IMR-90 (cell line): ENCODE measurements at regions of chr12 and their contacts with region 1.

Region 1: DNA sequence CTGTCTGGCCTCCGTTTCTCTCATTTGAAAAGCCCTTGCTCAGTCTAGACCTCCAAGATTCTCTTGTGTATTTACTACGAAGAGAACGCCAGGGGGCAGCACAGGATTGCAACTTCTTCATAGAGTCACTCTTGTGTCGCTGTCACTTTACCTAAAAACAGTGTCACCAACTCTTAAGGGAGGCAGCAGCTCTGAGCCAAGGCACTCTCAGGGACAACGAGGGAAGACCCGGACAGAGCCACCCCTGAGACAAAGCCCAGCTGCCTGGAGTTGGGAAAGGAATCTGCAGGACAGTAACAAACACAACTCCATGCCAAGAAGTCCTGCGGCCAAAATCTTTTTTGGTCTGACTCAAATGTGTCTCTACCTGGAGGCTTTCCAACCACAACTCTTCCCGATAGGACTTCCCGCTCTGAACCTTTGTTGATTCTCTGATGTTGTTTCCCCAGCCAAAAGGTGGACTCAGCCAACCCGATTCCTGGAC is 9.6 kb upstream of the RPAP3 start:
- DNase-seq: peak; percentile 71
- ATAC-seq: peak; percentile 74
- H3K4me3 ChIP-seq: no peak overlapping the region
- H3K27ac ChIP-seq: no peak overlapping the region
- H3K4me1 ChIP-seq: peaks cover 8% of the 10 kb centered on the region
- H3K27me3 ChIP-seq: no peaks in the 10 kb centered on the region
- CTCF ChIP-seq: peak; percentile 81
- POLR2A ChIP-seq: no peak
- RAD21 ChIP-seq: peak; percentile 84

Region 2: GRCh38 chr12:47190271-47190750 is 525.1 kb before region 1 on chr12:
- CTCF ChIA-PET with region 1: no interaction called
- POLR2A ChIA-PET with region 1: no interaction called
- dilution Hi-C with region 1: no loop called
- in situ Hi-C with region 1: no loop called
- intact Hi-C with region 1: no loop called
- DNase-seq: peak; percentile 74
- ATAC-seq: peak; percentile 45; the same call in 1 of the 2 replicates
- H3K4me3 ChIP-seq: no peak overlapping the region
- H3K27ac ChIP-seq: no peak overlapping the region
- H3K4me1 ChIP-seq: peaks cover 16% of the 10 kb centered on the region
- H3K27me3 ChIP-seq: no peaks in the 10 kb centered on the region
- CTCF ChIP-seq: no peak
- POLR2A ChIP-seq: no peak
- RAD21 ChIP-seq: no peak

Region 3: GRCh38 chr12:47758834-47759690 is 43.6 kb after region 1 on chr12 and contains the start of gene RAPGEF3:
- CTCF ChIA-PET with region 1: interaction called, 5 read pairs
- POLR2A ChIA-PET with region 1: no interaction called
- dilution Hi-C with region 1: no loop called
- in situ Hi-C with region 1: no loop called
- intact Hi-C with region 1: loop called (anchors 1 kb)
- DNase-seq: peak; percentile 75
- ATAC-seq: peak; percentile 96
- H3K4me3 ChIP-seq: peak within 1 kb of the TSS; percentile 65
- H3K27ac ChIP-seq: peak within 1 kb of the TSS; percentile 43
- H3K4me1 ChIP-seq: peaks cover 12% of the 10 kb centered on the region
- H3K27me3 ChIP-seq: no peaks in the 10 kb centered on the region
- CTCF ChIP-seq: peak; percentile 50
- POLR2A ChIP-seq: peak; percentile 35; the same call in 1 of the 2 replicates
- RAD21 ChIP-seq: peak; percentile 39
- total RNA-seq, gene RAPGEF3: 0.83 and 1.3 TPM in 2 replicates

Region 4: DNA sequence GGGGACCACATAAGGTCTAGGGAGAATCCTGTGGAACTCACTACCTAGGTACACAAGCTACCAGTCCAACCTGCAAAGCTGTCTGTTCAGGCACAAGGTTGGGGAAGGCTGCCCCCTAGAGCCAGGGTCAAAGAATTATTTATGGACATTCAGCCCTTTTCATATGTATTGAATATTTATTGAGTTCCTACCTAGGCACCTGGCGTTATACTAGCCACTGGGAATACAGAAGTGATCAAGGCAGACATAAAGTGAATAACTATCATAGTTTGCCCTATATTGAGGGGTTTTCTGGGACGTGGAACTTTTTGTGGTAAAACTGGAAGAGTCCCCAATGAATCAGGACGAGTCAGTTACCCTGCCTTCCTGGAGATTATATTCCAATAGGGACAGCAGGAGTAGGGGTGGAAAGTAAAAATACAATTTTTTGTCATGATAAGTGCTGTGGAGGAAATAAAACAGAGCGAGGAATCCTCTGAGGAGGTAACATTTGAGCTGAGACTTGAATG is 51.8 kb after region 1 on chr12:
- CTCF ChIA-PET with region 1: interaction called, 7 read pairs
- POLR2A ChIA-PET with region 1: no interaction called
- dilution Hi-C with region 1: no loop called
- in situ Hi-C with region 1: no loop called
- intact Hi-C with region 1: loop called (anchors 1 kb)
- DNase-seq: peak; percentile 19
- ATAC-seq: no peak
- H3K4me3 ChIP-seq: no peak overlapping the region
- H3K27ac ChIP-seq: no peak overlapping the region
- H3K4me1 ChIP-seq: peaks cover 7% of the 10 kb centered on the region
- H3K27me3 ChIP-seq: no peaks in the 10 kb centered on the region
- CTCF ChIP-seq: peak; percentile 55
- POLR2A ChIP-seq: no peak
- RAD21 ChIP-seq: peak; percentile 50

Region 5: GRCh38 chr12:47779301-47779942 is 64.0 kb after region 1 on chr12:
- CTCF ChIA-PET with region 1: interaction called, 5 read pairs
- POLR2A ChIA-PET with region 1: no interaction called
- dilution Hi-C with region 1: no loop called
- in situ Hi-C with region 1: loop called (anchors 5 kb)
- intact Hi-C with region 1: loop called (anchors 1 kb)
- DNase-seq: peak; percentile 79
- ATAC-seq: peak; percentile 83
- H3K4me3 ChIP-seq: no peak overlapping the region
- H3K27ac ChIP-seq: no peak overlapping the region
- H3K4me1 ChIP-seq: peaks cover 21% of the 10 kb centered on the region
- H3K27me3 ChIP-seq: no peaks in the 10 kb centered on the region
- CTCF ChIP-seq: peak; percentile 98
- POLR2A ChIP-seq: peak; percentile 35; the same call in 1 of the 2 replicates
- RAD21 ChIP-seq: peak; percentile 96

Region 6: DNA sequence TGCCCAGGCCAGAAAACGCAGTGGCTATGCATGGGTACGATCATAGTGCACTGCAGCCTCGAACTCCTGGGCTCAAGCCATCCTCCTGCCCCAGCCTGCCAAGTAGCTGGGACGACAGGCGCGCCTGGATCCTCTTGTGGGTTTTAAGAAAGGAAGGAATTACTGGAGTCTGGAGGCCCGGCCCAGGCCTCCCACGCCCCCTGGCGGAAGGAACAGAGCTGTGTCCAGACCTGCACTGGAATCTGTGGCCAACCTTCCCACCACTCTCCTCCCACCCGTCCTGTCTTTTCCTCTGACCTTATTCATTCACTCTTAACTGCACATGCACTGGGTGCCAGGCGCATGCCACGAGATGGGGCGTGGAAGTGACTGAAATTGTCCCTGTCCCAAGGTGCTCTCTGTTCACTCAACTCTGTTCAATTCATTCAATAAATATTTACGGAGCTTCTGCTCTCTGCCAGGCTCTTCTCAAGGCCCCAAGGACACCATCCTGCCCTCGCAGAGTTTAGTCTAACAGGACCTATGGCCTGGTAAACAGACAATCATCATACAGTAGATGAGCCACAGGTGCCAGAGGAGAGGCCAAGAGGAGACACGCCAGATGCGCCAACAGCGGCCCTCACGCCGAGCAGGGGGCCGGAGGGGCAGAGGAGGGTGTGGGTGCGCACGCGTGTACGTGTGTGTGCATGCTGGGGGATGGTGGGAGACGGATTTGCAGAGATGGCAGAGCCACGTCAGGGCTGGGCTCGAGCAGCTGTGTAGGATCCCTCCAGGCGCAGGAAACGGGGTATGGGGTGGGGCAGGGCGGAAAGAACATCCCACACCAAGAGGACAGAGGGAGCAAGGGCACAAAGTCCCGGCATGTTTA is 234.2 kb after region 1 on chr12:
- CTCF ChIA-PET with region 1: no interaction called
- POLR2A ChIA-PET with region 1: no interaction called
- dilution Hi-C with region 1: no loop called
- in situ Hi-C with region 1: no loop called
- intact Hi-C with region 1: loop called (anchors 1 kb)
- DNase-seq: peak; percentile 72
- ATAC-seq: peak; percentile 90
- H3K4me3 ChIP-seq: no peak overlapping the region
- H3K27ac ChIP-seq: no peak overlapping the region
- H3K4me1 ChIP-seq: peaks cover 12% of the 10 kb centered on the region
- H3K27me3 ChIP-seq: peaks cover 20% of the 10 kb centered on the region
- CTCF ChIP-seq: peak; percentile 88
- POLR2A ChIP-seq: no peak
- RAD21 ChIP-seq: peak; percentile 88

Region 7: DNA sequence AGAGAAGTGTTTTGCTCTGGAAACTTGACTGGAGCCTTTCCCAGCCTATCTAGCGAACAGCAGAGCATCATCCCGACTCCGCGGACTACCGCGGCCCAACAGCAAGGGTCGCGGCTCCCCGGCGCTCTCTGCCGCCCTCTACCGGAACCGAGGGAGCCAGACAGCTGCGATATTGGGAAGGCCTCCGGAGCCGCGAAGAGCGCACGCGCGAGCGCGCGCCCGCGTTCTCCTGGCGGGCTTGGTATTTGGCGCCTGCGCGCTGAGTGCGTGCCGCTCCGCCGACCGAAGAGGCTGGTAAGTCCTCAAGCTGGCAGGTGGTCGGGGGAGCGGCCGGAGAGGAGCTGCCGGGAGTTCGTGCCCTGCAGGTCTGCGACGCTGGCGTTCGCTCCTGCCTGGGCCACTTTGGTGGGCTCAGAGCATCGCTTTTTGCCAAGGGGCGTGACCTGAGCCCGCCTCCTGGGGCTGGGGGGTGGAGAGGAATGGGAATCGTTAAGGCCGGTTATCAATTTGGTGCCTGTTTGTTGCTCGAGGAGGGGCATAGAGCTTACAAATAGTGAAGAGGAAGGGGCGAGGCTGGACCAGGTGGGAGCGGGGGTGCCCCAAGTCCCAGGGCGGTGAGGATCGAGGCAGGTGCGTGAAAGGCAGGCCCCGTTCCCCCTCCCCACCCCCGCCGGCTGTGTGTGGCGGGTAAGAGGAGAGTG is 248.1 kb after region 1 on chr12 and contains the start of gene TMEM106C:
- CTCF ChIA-PET with region 1: no interaction called
- POLR2A ChIA-PET with region 1: no interaction called
- dilution Hi-C with region 1: no loop called
- in situ Hi-C with region 1: no loop called
- intact Hi-C with region 1: loop called (anchors 5 kb)
- DNase-seq: peak; percentile 85
- ATAC-seq: peak; percentile 99
- H3K4me3 ChIP-seq: peak within 1 kb of the TSS; percentile 63
- H3K27ac ChIP-seq: peak within 1 kb of the TSS; percentile 35; the same call in 1 of the 2 replicates
- H3K4me1 ChIP-seq: peaks cover 3% of the 10 kb centered on the region
- H3K27me3 ChIP-seq: peaks cover 8% of the 10 kb centered on the region
- CTCF ChIP-seq: peak; percentile 99
- POLR2A ChIP-seq: no peak
- RAD21 ChIP-seq: peak; percentile 67
- total RNA-seq, gene TMEM106C: 63.9 and 72.1 TPM in 2 replicates

Region 8: GRCh38 chr12:48165094-48165981 is 449.9 kb after region 1 on chr12:
- CTCF ChIA-PET with region 1: no interaction called
- POLR2A ChIA-PET with region 1: no interaction called
- dilution Hi-C with region 1: no loop called
- in situ Hi-C with region 1: no loop called
- intact Hi-C with region 1: loop called (anchors 10 kb)
- DNase-seq: peak; percentile 68
- ATAC-seq: peak; percentile 57; the same call in 1 of the 2 replicates
- H3K4me3 ChIP-seq: no peak overlapping the region
- H3K27ac ChIP-seq: no peak overlapping the region
- H3K4me1 ChIP-seq: no peaks in the 10 kb centered on the region
- H3K27me3 ChIP-seq: peaks cover 7% of the 10 kb centered on the region
- CTCF ChIP-seq: peak; percentile 84
- POLR2A ChIP-seq: no peak
- RAD21 ChIP-seq: peak; percentile 83